ENCODE measurements at regions of chr6 and their contacts with region 1.

Region 1: GRCh38 chr6:87154993-87155841 is at the start of gene ZNF292:
- DNase-seq: peak; percentile 99
- ATAC-seq: peak; percentile 86
- H3K4me3 Mint-ChIP-seq: peak within 1 kb of the TSS; percentile 100
- H3K27ac Mint-ChIP-seq: peak within 1 kb of the TSS; percentile 99
- H3K4me1 Mint-ChIP-seq: peaks cover 48% of the 10 kb centered on the region
- H3K27me3 Mint-ChIP-seq: no peaks in the 10 kb centered on the region
- total RNA-seq, gene ZNF292: 68.8 to 81.8 TPM

Region 2: GRCh38 chr6:86448398-86448797 is 706.8 kb before region 1 on chr6:
- CTCF ChIA-PET with region 1: no interaction called
- POLR2A ChIA-PET with region 1: no interaction called
- intact Hi-C with region 1: no loop called
- DNase-seq: no peak
- ATAC-seq: no peak
- H3K4me3 Mint-ChIP-seq: no peak overlapping the region
- H3K27ac Mint-ChIP-seq: no peak overlapping the region
- H3K4me1 Mint-ChIP-seq: no peaks in the 10 kb centered on the region
- H3K27me3 Mint-ChIP-seq: no peaks in the 10 kb centered on the region

Region 3: DNA sequence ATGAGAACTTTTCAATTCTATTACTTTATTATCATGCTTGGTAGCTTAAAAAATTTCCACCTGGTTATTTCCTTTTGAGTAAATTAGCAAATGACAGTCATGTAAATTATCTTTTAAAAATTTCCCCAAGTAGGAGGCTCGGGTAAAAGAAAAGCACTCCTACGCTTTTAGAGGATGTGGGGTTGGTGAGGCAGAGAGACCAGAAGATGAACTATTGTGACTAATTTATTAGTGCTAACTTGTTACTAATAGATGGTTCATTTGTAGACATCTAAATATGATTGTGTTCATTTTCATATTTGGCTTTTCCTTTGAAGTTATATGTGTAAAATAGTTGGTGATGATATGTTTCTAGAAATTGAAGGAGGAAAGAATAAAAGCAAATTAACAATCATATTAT is 27.1 kb after region 1 on chr6:
- CTCF ChIA-PET with region 1: interaction called, 4 read pairs
- POLR2A ChIA-PET with region 1: interaction called, 3 read pairs
- intact Hi-C with region 1: loop called (anchors 1 kb)
- DNase-seq: peak; percentile 35
- ATAC-seq: peak; percentile 65
- H3K4me3 Mint-ChIP-seq: peak overlapping the region; percentile 15
- H3K27ac Mint-ChIP-seq: peak overlapping the region; percentile 81
- H3K4me1 Mint-ChIP-seq: peaks cover 84% of the 10 kb centered on the region
- H3K27me3 Mint-ChIP-seq: no peaks in the 10 kb centered on the region

Region 4: GRCh38 chr6:87237804-87238203 is 82.6 kb after region 1 on chr6:
- CTCF ChIA-PET with region 1: interaction called, 3 read pairs
- POLR2A ChIA-PET with region 1: no interaction called
- intact Hi-C with region 1: loop called (anchors 5 kb)
- DNase-seq: no peak
- ATAC-seq: peak; percentile 64
- H3K4me3 Mint-ChIP-seq: no peak overlapping the region
- H3K27ac Mint-ChIP-seq: no peak overlapping the region
- H3K4me1 Mint-ChIP-seq: no peaks in the 10 kb centered on the region
- H3K27me3 Mint-ChIP-seq: no peaks in the 10 kb centered on the region

Region 5: DNA sequence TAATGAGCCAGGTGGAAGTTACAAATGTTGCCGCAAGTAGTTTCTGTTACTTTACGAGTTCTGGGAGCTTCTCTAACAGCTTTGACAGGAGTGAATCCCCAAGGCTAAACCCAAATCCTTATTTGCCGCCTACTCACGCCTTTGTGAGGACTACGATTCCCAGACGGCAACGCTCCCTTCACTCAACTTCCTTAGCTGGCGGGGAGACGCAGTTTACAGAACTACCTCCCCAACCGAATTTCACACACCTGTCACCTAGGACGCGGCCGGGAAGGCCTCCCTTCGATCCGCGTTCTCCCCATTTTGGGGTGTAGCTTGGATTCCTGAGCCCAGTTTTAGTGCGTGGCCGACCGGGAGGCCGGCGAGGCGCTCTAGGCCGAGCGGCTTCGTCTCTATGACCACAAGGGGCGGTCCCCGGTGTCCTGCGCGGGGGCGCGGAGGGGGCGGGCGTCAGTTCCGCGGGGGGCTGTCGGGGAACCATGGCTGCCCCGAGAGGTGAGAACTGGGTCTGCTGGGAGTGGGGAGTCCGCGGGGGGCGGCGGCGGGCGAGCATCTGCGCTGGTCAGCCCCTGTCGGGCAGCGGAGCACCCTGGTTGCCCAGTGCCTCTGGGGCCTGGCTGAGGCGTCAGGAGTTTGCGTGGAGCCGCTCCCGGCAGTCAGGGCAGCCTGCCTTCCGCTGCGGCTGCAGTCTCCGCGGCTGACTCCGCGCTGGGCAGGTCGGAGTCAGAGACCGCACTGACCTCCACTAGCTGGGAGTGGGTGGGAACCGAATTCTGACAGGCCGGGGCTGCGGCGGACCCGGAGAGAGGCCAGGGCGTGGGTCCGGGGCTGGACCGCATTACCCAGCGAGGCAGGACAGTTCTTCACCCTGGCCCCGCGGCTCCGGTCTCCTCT is 317.6 kb after region 1 on chr6 and contains the start of gene SLC35A1:
- CTCF ChIA-PET with region 1: no interaction called
- POLR2A ChIA-PET with region 1: no interaction called
- intact Hi-C with region 1: loop called (anchors 1 to 5 kb)
- DNase-seq: peak; percentile 92
- ATAC-seq: peak; percentile 90
- H3K4me3 Mint-ChIP-seq: peak within 1 kb of the TSS; percentile 88
- H3K27ac Mint-ChIP-seq: peak within 1 kb of the TSS; percentile 93
- H3K4me1 Mint-ChIP-seq: peaks cover 18% of the 10 kb centered on the region
- H3K27me3 Mint-ChIP-seq: peaks cover 3% of the 10 kb centered on the region
- total RNA-seq, gene SLC35A1: 6.5 to 9.9 TPM

Region 6: DNA sequence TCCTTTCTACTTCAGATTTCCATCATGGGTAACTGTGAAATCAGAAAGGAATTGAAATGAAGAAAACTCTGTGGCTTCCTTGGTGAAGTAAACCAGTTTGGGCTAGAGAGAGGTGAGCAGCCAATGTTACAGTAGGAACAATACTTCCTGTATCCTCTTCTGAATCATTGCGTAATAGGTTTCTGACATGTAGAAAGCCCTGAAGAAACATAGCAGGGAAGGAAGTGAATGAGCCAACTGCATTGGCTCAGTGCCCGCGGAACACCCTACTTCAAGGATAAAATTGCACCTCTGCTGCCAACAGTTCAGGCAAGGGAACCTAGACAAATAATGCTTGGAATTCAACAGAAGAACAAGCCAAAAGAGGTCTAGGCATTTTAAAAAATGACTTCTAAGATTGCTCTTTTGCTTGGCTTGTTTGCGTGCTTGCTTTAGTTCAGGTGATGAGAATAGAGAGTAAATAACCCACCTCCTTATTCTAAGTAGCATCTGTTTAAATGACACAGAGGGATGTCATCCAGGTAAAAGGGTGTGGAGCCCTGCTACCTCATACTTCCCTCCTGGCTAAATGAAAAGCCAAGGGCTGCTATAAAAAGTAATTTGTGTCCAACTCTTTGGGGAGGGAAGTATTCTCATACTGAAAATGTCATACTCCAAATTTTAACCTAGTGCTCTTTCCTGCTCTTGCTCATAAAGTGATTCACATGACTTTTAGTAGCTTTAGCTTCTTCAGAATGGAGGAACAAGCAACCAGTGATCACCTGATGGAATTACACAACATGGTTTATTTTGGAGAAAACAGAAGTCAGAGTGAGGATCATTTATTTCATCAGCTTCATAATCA is 576.8 kb after region 1 on chr6:
- CTCF ChIA-PET with region 1: no interaction called
- POLR2A ChIA-PET with region 1: no interaction called
- intact Hi-C with region 1: loop called in 1 of 2 experiments (anchors 2 kb)
- DNase-seq: peak; percentile 67
- ATAC-seq: peak; percentile 78
- H3K4me3 Mint-ChIP-seq: no peak overlapping the region
- H3K27ac Mint-ChIP-seq: peak overlapping the region; percentile 75
- H3K4me1 Mint-ChIP-seq: peaks cover 32% of the 10 kb centered on the region
- H3K27me3 Mint-ChIP-seq: peaks cover 6% of the 10 kb centered on the region

Region 7: DNA sequence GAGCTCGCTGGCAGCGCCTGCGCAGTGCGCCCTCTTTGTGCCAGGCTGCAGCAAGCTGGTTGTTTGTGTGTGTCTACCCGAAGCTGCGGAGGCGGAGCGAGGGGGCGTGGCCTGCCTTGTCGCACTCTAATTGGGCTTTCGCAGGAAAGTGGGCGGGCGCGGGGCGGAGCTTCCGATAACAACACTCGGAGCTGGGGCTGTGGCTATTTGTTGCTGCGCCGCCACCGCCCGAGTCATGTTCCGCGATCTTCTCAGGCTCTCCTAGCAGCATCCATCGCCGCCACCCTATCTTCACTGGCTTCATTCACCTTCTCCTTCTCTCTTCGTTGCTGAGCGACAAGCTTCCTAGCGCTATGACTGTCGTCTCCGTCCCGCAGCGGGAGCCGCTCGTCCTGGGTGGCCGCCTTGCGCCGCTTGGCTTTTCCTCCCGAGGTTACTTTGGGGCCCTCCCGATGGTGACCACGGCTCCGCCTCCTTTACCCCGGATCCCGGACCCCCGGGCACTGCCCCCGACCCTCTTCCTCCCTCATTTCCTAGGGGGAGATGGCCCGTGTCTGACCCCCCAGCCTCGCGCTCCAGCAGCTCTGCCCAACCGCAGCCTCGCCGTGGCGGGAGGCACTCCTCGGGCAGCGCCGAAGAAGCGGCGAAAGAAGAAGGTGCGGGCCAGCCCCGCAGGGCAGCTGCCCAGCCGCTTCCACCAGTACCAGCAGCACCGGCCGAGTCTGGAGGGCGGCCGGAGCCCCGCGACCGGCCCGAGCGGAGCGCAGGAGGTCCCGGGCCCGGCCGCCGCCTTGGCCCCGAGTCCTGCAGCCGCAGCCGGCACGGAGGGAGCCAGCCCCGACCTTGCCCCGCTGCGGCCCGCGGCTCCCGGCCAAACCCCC is 1925.6 kb after region 1 on chr6 and contains the start of gene PNRC1:
- CTCF ChIA-PET with region 1: no interaction called
- POLR2A ChIA-PET with region 1: no interaction called
- intact Hi-C with region 1: loop called in 1 of 2 experiments (anchors 10 kb)
- DNase-seq: peak; percentile 100
- ATAC-seq: peak; percentile 72
- H3K4me3 Mint-ChIP-seq: peak within 1 kb of the TSS; percentile 94
- H3K27ac Mint-ChIP-seq: peak within 1 kb of the TSS; percentile 100
- H3K4me1 Mint-ChIP-seq: peaks cover 28% of the 10 kb centered on the region
- H3K27me3 Mint-ChIP-seq: no peaks in the 10 kb centered on the region
- total RNA-seq, gene PNRC1: 85.6 to 93.7 TPM